ENCODE measurements at regions of chr1 and their contacts with region 1.

Region 1: DNA sequence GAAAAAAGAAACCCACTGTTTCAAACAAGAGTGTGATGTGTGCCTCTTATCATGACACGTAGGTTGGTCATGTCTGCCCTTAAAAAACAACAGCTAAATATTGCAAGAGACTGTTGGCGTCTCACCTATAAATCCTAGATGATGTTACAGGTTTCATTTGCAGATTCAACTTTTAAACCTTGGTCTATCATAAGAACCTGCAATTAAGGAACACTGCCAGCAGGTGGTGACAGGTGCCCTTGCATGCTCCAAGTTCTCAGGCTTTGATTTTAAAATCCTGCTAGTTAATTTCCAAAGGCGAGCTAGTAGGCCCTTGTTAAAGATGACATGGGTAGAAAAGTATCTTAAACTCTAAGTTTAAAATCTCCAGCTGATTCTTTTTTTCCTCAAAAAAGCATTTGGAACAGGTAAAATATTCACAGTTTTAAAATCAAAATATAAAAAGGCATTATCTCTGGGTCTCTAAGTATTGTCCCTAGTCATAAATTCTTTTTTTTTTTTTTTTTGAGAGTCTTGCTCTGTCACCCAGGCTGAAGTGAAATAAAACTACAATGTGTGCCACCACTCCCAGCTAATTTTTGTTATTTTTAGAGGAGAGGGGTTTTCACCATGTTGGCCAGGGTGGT is 39.1 kb downstream of the CLSTN1 start:
- DNase-seq: peak; percentile 55
- ATAC-seq: peak; percentile 72; the same call in 1 of the 2 replicates
- H3K4me3 ChIP-seq: no peak overlapping the region
- H3K27ac ChIP-seq: no peak overlapping the region
- H3K4me1 ChIP-seq: no peaks in the 10 kb centered on the region
- H3K27me3 ChIP-seq: no peaks in the 10 kb centered on the region
- CTCF ChIP-seq: peak; percentile 87

Region 2: DNA sequence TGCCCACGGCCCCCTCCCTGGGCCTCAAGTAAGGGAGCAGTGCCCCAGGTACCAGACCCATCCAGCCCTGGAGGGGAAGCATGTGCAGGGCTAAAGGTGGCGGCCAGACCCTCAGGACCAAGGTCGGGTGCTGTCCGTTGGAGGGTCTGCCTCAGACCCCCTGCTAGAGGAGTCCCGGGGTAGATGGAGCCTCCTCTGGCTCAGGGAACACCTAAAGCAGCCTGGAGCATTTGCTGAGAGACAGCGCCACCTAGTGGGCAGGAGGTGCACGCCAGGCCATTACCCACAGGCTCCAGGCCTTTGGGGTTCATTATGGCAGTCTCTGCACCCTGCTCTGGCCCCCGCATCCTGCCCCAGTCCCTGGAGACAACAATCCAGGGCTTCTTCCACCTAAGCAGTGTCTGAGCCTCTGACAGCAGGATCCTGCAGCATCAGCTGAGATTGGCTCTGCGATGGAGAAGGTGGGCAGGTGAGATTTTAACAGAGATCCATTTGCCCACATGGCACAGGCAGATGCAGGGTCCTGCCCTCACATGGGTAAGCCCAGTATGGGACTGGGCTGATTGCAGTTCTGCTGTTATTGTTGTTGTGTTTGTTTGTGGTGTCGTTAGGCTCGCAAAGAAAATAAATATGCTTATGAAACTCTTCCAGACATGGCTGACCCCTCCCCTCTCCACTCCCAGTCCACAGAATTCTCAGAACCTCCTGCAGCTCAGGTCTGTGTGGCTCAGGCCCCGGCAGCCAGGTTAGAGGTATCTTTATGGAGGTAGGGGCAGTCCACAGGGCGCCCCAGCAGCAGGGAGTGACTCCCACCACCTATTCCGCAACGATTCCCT is 83.0 kb after region 1 on chr1:
- CTCF ChIA-PET with region 1: interaction called, 17 read pairs
- POLR2A ChIA-PET with region 1: no interaction called
- in situ Hi-C with region 1: no loop called
- intact Hi-C with region 1: loop called (anchors 1 kb)
- DNase-seq: no peak
- ATAC-seq: peak; percentile 94
- H3K4me3 ChIP-seq: no peak overlapping the region
- H3K27ac ChIP-seq: no peak overlapping the region
- H3K4me1 ChIP-seq: no peaks in the 10 kb centered on the region
- H3K27me3 ChIP-seq: no peaks in the 10 kb centered on the region
- CTCF ChIP-seq: peak; percentile 97

Region 3: DNA sequence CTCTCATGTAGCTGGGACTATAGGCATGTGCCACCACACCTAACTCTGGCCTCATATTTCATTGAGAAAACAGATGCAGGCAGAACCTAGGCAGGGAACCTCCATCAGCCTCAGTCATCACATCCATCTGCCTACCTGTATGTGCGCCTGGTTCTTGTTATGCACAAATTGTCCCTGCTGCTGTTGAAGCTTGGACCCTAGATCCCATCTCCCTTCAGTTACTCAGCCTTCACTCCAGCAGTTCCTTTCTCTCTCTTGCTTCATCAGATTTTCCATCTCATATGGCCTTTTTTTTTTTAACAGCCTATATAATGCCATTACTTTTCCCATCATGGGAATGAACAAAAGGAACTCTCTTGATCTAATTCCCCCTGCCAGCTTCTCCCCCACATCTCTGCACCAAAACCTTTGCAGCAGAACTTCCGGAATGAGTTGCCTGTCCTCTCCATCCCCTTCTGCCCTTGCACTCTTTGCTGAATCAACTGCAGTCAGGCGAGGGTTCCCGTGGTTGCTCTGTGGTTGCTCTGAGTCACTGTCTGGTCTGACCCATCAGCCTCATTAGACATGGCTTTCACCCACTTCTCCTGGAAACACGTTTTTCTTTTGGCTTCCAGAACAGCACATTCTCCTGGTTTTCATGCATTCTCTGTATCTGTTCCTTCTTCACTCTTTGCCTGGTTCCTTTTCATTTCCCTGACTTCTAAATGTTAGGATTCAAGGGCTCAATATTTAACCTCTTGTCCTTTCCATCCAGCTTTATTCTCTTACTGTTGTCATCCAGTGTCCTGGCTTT is 289.6 kb after region 1 on chr1:
- CTCF ChIA-PET with region 1: no interaction called
- POLR2A ChIA-PET with region 1: no interaction called
- in situ Hi-C with region 1: no loop called
- intact Hi-C with region 1: no loop called
- DNase-seq: peak; percentile 72
- ATAC-seq: no peak
- H3K4me3 ChIP-seq: no peak overlapping the region
- H3K27ac ChIP-seq: no peak overlapping the region
- H3K4me1 ChIP-seq: no peaks in the 10 kb centered on the region
- H3K27me3 ChIP-seq: no peaks in the 10 kb centered on the region
- CTCF ChIP-seq: no peak